PC-3 (cell line): ENCODE measurements at regions of chr14 and their contacts with region 1.

Region 1: DNA sequence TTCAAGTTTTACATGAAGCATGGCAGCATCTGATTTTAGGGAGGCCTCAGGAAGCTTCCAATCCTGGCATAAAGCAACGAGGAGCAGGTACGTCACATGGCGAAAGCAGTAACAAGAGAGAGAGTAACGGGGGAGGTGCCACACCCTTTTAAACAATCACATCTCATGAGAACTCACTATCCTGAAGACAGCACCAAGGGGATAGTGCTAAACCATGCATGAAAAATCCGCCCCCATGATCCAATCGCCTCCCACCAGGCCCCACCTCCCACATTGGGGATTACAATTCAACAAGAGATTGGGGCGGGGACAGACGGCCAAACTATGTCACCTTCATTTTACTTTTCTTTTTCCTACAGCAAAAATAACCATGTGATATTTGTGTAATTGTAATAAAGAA is 7.2 kb upstream of the MAP3K9 start:
- DNase-seq: no peak
- ATAC-seq: no peak
- H3K4me3 ChIP-seq: no peak overlapping the region
- H3K27ac ChIP-seq: no peak overlapping the region
- H3K4me1 ChIP-seq: peaks cover 40% of the 10 kb centered on the region
- H3K27me3 ChIP-seq: no peaks in the 10 kb centered on the region
- CTCF ChIP-seq: no peak

Region 2: DNA sequence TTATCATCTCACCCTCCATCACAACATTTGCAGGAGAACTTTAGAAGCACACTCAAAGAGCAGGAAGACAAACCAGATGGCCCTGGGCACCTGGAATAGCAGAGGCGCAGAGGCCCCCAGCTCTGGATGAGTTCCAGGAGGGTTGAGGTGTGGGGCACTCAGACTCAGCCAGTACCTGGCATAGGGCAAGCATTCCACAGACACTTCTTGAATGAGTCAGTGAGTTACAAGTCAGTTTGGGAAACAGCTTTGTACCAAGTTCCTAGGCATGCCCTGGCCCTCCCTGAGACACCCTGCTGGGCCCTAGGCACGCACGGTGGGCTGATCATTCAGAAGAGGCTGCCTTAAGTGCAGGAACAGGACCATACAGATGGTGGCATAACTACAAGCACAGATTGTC is 61.5 kb before region 1 on chr14:
- CTCF ChIA-PET with region 1: no interaction called
- POLR2A ChIA-PET with region 1: no interaction called
- intact Hi-C with region 1: loop called (anchors 2 kb)
- DNase-seq: peak; percentile 98
- ATAC-seq: peak; percentile 99
- H3K4me3 ChIP-seq: no peak overlapping the region
- H3K27ac ChIP-seq: peak overlapping the region; percentile 59
- H3K4me1 ChIP-seq: peaks cover 33% of the 10 kb centered on the region
- H3K27me3 ChIP-seq: no peaks in the 10 kb centered on the region
- CTCF ChIP-seq: no peak

Region 3: GRCh38 chr14:70999117-70999516 is 182.6 kb after region 1 on chr14:
- CTCF ChIA-PET with region 1: no interaction called
- POLR2A ChIA-PET with region 1: no interaction called
- intact Hi-C with region 1: no loop called
- DNase-seq: no peak
- ATAC-seq: no peak
- H3K4me3 ChIP-seq: no peak overlapping the region
- H3K27ac ChIP-seq: no peak overlapping the region
- H3K4me1 ChIP-seq: peaks cover 5% of the 10 kb centered on the region
- H3K27me3 ChIP-seq: no peaks in the 10 kb centered on the region
- CTCF ChIP-seq: no peak

Region 4: DNA sequence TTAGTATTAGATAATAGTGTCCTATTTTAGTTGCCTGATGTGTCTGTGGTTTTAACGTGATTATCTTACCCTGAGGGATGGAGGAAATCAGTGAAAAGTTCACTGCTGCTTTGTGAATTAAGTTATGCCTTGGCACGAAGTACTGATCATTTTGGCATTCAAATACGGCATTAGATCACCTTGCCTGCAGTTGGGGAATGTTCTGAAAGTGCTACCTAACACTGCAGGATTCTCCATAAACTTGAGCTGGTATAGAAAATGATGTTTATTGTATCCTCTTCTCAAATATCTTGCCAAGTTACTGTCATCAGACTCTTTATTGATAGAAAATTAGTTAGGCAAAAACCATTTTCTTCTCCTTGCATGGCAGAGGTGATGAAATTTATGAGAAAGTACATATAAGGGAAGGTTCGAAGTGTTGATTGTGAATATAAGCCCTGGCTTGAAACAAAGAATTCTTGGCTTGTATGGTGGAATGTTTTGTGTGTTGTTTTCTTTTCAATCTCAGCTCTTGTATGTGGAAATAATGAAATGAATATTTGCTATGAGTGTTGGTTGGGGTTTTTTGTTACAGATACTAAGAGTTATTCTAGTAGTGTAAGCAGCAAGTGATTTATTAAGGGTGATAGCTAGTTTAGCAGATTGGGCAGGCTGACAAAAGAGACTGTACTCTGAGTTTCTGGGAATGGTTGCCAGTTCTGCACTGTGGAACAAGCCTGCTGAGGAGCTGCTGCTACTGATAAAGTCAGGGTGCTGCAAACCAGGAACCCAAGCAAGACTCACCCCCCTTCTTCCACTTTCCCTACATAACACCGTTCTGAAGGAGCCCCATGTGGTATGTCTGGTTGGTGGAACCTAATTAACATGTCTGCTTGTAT is 539.0 kb after region 1 on chr14:
- CTCF ChIA-PET with region 1: no interaction called
- POLR2A ChIA-PET with region 1: no interaction called
- intact Hi-C with region 1: no loop called
- DNase-seq: no peak
- ATAC-seq: peak; percentile 16
- H3K4me3 ChIP-seq: no peak overlapping the region
- H3K27ac ChIP-seq: no peak overlapping the region
- H3K4me1 ChIP-seq: peaks cover 20% of the 10 kb centered on the region
- H3K27me3 ChIP-seq: no peaks in the 10 kb centered on the region
- CTCF ChIP-seq: no peak